GM13976 (cell line): ENCODE measurements at regions of chr16 and their contacts with region 1.

Region 1: DNA sequence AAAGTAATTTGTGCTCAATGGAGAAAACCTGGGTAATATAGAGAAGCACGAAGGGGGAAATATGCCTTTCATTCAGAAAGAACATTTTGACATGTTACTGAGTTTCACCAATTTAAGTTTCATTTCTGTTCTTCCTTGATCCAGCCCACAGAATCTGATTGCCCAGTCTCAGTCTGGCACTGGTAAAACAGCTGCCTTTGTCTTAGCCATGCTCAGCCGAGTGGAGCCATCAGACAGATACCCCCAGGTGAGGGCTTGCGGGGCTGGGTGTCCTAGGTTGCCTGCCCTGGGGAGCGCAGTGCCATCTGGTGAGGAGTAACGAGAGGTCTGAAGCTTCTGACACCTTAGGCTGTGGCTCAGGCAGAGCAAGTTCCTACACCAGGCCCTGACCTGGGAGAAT is 17.7 kb downstream of the DDX19A start:
- DNase-seq: no peak
- CTCF ChIP-seq: no peak

Region 2: DNA sequence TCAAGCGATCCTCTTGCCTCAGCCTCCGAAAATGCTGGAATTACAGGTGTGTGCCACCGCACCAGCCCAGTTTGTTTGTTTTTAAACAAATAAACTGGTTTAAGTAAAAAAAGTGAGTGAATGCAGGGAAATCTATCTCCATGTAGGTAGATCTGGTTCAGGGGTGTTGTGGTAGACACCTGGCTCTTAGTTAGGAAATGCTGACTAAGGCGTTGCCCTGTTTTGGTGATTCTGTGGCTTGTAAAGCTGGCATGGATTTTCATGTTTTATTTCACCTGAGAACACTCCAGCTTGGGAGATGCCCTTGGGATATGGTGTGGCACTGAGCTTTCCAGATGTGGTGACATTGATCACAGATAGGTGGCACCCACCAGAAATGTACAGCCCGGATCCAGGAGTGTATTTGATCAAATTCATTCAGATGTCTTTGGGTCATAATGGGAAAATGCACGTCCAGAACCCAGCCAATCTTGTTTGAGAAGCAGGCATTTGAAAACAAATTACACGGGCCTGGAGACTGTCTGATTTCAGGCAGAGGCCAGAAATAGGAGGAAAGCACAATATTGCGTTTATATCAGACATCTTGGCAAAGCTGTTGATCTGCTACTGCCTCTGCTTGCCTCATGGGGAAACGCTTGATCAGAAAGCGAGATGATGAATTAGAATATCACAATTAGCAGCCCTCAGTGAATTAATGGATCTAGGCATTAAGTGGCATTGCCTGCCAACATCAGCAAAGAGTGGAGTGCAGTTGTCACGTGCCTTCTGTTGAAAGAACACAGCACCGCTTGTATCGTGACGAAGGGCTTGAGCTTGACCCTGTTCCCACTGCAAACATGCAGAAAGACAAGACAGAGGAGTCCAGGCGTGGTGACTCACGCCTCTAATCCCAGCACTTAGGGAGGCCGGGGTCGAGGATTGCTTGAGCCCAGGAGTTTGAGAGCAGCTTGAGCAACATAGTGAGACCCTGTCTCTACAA is 274.7 kb after region 1 on chr16:
- in situ Hi-C with region 1: loop called (anchors 25 kb)
- DNase-seq: no peak
- CTCF ChIP-seq: no peak